ENCODE measurements at regions of chr9 and their contacts with region 1.

Region 1: GRCh38 chr9:107489687-107490605 is at the start of gene KLF4:
- DNase-seq: peak; percentile 93
- ATAC-seq: peak; percentile 89
- total RNA-seq, gene KLF4: 30.5 TPM

Region 2: DNA sequence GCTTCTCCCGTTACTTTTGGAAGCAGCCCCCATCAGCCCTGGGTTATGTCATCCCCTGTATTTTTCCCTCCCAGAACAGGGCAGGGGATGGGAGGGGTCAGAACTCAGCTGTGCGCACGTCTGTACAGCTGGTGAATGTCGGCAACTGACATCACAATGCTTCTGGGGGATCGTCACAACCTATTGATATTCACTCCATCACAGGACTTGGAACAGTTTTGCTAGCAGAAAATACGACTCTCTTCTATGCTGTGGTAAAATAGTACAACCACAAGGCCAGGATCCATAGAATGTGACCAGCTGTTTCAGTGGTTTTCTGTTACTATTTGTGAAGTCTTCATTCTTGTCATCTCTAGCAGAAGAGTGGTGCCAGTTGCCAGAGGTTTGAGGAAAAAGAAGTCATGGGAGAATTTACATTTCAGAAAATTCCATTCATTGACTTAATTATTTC is 76.7 kb after region 1 on chr9:
- intact Hi-C with region 1: no loop called
- DNase-seq: no peak
- ATAC-seq: peak; percentile 84

Region 3: DNA sequence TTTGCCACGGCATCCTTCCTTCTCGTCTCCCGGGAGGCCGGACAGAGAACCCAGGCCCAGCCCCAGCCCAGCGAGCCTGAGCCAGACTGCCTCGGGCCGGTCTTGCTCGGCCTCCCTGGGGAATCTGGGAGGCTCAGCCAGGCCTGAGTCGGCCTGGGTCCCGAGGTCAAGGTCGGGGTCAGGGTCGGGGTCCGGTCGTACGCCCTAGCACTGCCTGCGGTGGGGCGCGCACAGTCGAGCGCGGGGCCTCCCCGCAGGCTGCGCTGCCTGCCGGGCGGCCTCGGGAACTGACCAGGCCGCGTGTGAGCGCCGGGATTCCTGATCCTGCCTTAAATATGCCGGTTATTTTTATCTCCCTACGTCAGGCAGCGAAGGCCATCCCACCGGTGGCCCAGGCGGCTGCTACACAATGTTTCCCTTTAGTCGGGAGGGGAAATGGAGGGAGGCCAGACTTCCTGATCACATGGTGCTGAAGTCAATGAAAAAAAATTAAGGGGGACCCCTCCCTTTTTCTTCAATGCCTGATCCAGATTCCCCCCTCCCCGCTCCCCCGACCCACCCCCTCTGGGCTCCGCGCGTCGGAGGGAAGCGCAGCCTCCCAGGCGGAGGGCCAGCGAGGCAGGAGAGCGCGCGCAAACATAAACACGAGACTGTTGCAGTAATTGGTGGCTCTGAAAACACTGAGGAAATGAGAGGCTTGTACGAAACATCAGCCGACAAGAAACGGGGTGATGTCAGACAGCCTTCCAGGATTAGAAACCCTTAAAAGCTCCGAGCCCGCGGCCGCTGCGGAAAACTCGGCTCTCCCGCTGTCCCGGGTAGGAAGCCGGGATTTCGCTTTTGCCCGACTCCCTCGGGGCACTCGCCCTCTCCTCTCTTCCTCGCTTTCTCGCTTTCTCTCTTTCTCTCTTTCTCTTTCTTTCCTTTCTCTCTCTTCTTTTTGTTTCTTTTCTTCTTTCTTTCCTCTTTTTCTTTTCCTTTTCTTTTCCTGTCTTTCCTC is 147.8 kb after region 1 on chr9:
- intact Hi-C with region 1: loop called (anchors 5 kb)
- DNase-seq: peak; percentile 91
- ATAC-seq: peak; percentile 95

Region 4: DNA sequence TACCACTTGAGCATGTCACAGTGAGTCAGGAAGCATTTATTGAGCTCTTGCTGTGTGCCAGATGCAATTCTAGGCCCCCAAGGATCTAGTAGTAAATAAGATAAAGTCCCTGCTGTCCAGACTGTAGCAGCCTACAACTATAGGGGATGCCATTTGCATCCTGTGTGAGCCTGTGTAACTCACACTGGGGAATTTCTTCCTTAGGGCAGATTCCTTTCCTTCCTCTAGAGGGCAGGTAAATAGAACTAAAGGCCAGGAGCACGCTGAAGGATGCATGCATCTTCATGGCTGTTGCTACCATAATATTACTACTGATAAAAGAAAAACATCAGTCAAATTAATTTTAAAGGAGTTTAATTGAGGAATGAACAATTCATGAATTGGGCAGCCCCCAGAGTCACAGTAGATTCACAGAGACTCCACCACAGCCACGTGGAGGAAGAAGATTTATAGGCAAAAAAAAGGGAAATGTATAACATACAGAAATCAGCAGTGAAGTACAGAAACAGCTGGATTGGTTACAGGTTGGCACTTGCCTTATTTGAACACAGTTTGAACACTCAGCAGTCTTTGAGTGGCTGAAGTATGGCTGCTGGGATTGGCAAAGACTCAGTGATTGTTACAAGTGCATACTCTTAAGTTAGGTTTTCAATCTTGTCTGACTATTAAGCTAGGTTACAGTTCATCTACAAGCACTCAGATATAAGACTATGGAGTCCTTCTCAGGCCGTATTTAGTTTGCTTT is 1267.0 kb after region 1 on chr9:
- intact Hi-C with region 1: loop called (anchors 5 kb)
- DNase-seq: no peak
- ATAC-seq: no peak

Measured in left ventricle myocardium superior (tissue), 1 donor.